Activated T-helper 1 cell treated with anti-CD3 and anti-CD28 coated beads, Interleukin-12 subunit alpha, Interleukin-12 subunit beta, Interleukin-2, Interleukin-4 antibody, amounts not matched to agents 30 ng/mL and 10 ng/mL and 1 ng/mL, durations not matched to agents 14 hours and 24 hours and 36 hours (primary cell): ENCODE measurements at regions of chrX and their contacts with region 1.

Region 1: GRCh38 chrX:136920001-136920400 is 39.5 kb upstream of the RBMX start:
- DNase-seq: no peak
- H3K4me3 Mint-ChIP-seq: no peak overlapping the region
- H3K27ac Mint-ChIP-seq: no peak overlapping the region
- H3K4me1 Mint-ChIP-seq: no peaks in the 10 kb centered on the region
- H3K27me3 Mint-ChIP-seq: no peaks in the 10 kb centered on the region

Region 2: DNA sequence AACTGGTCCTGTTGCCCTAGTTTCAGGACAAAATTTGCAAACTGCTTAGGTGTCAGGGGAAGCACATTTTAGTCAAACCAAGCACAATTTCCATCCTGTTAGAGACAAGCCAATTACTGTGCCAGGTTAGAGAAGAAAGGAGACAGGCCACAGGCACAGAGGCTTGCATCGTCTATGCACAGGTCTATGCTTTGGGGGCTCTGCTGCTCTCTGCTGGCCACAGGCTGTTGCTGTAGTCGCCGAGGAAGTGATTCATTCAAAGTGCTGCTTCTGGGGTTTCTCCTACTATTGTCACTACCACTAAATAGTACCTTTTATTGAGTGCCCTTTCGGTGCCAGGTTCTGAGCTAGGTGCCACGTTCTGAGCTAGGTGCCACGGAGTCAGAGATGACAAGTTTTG is 342.4 kb before region 1 on chrX:
- intact Hi-C with region 1: loop called (anchors 10 kb)
- DNase-seq: peak; percentile 63
- H3K4me3 Mint-ChIP-seq: peak overlapping the region; percentile 42
- H3K27ac Mint-ChIP-seq: peak overlapping the region; percentile 80
- H3K4me1 Mint-ChIP-seq: peaks cover 42% of the 10 kb centered on the region
- H3K27me3 Mint-ChIP-seq: no peaks in the 10 kb centered on the region

Region 3: GRCh38 chrX:136608295-136609171 is 311.5 kb before region 1 on chrX:
- intact Hi-C with region 1: loop called (anchors 1 kb)
- DNase-seq: no peak
- H3K4me3 Mint-ChIP-seq: peak overlapping the region; percentile 31
- H3K27ac Mint-ChIP-seq: peak overlapping the region; percentile 44
- H3K4me1 Mint-ChIP-seq: peaks cover 47% of the 10 kb centered on the region
- H3K27me3 Mint-ChIP-seq: no peaks in the 10 kb centered on the region

Region 4: GRCh38 chrX:136711147-136711546 is 208.9 kb before region 1 on chrX:
- intact Hi-C with region 1: loop called (anchors 1 kb)
- DNase-seq: no peak
- H3K4me3 Mint-ChIP-seq: no peak overlapping the region
- H3K27ac Mint-ChIP-seq: peak overlapping the region; percentile 91
- H3K4me1 Mint-ChIP-seq: peaks cover 51% of the 10 kb centered on the region
- H3K27me3 Mint-ChIP-seq: no peaks in the 10 kb centered on the region

Region 5: DNA sequence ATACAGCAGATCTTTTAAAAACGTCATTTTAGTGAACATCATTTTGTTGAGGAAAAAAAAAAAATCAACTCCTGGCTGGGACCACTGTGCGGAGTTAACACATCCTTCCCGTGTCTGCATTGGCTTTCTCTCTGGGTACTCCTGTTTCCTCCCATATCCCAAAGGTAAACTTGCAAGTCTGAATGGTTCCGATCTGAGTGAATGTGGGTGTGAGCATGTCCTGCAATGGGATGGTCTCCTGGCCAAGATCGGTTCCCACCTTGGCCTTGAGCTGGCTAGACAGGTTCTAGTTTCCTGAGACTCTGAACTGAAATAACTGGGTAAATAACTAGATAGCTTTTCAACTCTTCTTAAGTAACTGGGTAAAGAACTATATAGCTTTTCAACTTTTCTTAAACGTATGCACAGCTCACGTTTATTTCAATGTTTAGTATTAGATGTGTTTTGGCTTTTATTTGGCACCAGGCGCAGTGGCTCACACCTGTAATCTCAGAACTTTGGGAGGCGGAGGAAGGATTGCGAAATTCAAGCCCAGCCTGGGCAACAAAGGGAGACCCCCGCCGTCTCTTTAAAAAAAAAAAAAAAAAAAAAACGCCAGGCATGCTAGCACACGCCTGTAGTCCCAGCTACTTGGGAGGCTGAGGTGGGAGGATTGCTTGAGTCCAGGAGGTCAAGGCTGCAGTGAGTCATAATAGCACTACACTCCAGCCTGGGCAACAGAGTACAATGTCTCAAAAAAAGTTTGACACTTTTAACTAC is 53.5 kb before region 1 on chrX:
- intact Hi-C with region 1: loop called (anchors 5 kb)
- DNase-seq: no peak
- H3K4me3 Mint-ChIP-seq: no peak overlapping the region
- H3K27ac Mint-ChIP-seq: peak overlapping the region; percentile 79
- H3K4me1 Mint-ChIP-seq: peaks cover 33% of the 10 kb centered on the region
- H3K27me3 Mint-ChIP-seq: no peaks in the 10 kb centered on the region

Region 6: DNA sequence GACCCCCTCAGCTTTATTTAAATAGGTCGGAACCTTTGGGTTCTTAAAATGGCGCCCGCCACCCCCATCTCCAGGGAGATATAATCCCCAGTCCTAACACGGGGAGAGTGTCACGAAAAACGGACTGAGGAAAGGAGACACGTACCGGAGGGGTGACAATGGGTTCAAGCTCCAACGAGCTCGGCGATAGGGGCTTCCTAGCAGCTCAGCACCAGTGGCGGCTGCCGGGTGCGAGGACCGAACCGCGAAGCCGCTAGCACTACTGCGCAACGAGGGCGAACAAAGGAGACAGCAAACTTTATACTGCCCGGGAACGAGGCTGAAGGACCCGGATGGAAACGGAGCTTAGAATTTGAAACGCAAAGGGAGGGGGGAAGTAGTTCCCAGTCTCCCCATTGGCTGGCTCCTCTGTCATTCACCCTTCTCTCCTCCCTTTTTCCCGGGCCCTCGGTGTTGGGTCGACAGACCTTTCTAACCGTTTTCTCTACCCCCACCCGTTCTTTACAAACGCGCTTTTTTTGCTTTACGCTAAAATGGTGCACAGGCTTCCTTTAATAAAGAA is 39.5 kb before region 1 on chrX and contains the start of gene RBMX:
- intact Hi-C with region 1: loop called (anchors 1 kb)
- DNase-seq: peak; percentile 84
- H3K4me3 Mint-ChIP-seq: peak within 1 kb of the TSS; percentile 98
- H3K27ac Mint-ChIP-seq: peak within 1 kb of the TSS; percentile 99
- H3K4me1 Mint-ChIP-seq: peaks cover 6% of the 10 kb centered on the region
- H3K27me3 Mint-ChIP-seq: no peaks in the 10 kb centered on the region
- total RNA-seq, gene RBMX: 308 and 327 TPM in 2 replicates

Region 7: GRCh38 chrX:136909706-136910564 is 10.1 kb before region 1 on chrX:
- intact Hi-C with region 1: loop called (anchors 1 kb)
- DNase-seq: peak; percentile 51
- H3K4me3 Mint-ChIP-seq: peak overlapping the region; percentile 95
- H3K27ac Mint-ChIP-seq: peak overlapping the region; percentile 88
- H3K4me1 Mint-ChIP-seq: peaks cover 23% of the 10 kb centered on the region
- H3K27me3 Mint-ChIP-seq: no peaks in the 10 kb centered on the region